GM23248 (cell line): ENCODE measurements at regions of chr16 and their contacts with region 1.

Region 1: DNA sequence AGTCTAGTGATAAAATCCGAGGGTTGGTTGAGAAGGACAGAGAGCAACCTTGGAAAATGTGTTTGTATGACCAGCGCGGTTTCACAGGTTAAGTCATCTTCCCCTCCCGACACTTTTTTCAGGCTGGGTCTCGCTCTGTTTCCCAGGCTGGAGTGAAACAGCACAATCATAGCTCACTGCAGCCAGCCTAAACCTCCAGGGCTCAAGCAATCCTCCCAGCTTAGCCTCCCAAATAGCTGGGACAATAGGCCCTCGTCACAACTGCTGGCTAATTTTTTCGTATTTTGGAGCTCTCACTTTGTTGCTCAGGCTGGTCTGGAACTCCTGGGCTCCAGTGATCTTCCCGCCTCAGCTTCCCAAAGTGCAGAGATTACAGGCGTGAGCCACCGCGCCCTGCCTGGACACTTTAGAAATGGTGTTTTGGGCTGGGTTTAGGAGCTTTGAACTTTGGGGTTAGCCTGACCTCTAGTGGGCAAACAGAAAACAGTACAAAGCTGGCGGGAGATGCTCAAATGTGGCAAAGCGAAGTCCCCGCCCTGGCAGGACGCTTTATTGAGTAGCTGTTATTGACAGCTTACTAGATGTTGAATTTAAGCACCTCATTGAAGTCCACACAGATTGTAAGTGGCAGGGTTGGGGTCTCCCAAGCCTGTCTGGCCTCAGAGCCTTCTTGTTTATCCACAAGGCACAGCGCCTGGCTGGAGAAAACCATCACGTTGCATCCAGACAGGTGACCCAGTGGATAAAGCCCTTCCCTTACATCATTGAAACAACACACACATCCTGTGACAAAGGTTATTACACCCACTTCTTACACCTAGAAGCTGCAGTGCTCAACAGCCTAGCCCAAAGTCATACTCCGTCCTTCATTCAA is 34.7 kb upstream of the RBBP6 start:
- DNase-seq: peak; percentile 79
- H3K4me3 ChIP-seq: no peak overlapping the region
- H3K27ac ChIP-seq: no peak overlapping the region
- H3K4me1 ChIP-seq: peaks cover 13% of the 10 kb centered on the region
- H3K27me3 ChIP-seq: no peaks in the 10 kb centered on the region; the same call in 1 of the 2 replicates

Region 2: GRCh38 chr16:23678430-23679273 is 826.1 kb before region 1 on chr16 and contains the start of gene PLK1:
- in situ Hi-C with region 1: loop called (anchors 25 kb)
- DNase-seq: peak; percentile 97
- H3K4me3 ChIP-seq: peak within 1 kb of the TSS; percentile 78
- H3K27ac ChIP-seq: peak within 1 kb of the TSS; percentile 60
- H3K4me1 ChIP-seq: peaks cover 25% of the 10 kb centered on the region
- H3K27me3 ChIP-seq: no peaks in the 10 kb centered on the region
- total RNA-seq, gene PLK1: 17.2 and 20.0 TPM in 2 replicates

Region 3: GRCh38 chr16:24041826-24042631 is 462.7 kb before region 1 on chr16:
- in situ Hi-C with region 1: loop called (anchors 10 kb)
- DNase-seq: peak; percentile 80
- H3K4me3 ChIP-seq: no peak overlapping the region
- H3K27ac ChIP-seq: no peak overlapping the region
- H3K4me1 ChIP-seq: no peaks in the 10 kb centered on the region
- H3K27me3 ChIP-seq: no peaks in the 10 kb centered on the region

Region 4: GRCh38 chr16:24394341-24394740 is 110.4 kb before region 1 on chr16:
- in situ Hi-C with region 1: no loop called
- DNase-seq: no peak
- H3K4me3 ChIP-seq: no peak overlapping the region
- H3K27ac ChIP-seq: no peak overlapping the region
- H3K4me1 ChIP-seq: no peaks in the 10 kb centered on the region
- H3K27me3 ChIP-seq: no peaks in the 10 kb centered on the region